Activated CD8-positive, alpha-beta memory T cell treated with anti-CD3 and anti-CD28 coated beads, Interleukin-2, amount 10 ng/mL, durations not matched to agents 7 days and 5 days (primary cell): ENCODE measurements at regions of chr12 and their contacts with region 1.

Region 1: GRCh38 chr12:6867413-6868210 is at the start of gene TPI1:
- DNase-seq: peak; percentile 87
- ATAC-seq: peak; percentile 71
- H3K4me3 Mint-ChIP-seq: peak within 1 kb of the TSS; percentile 98
- H3K27ac Mint-ChIP-seq: peak within 1 kb of the TSS; percentile 90
- H3K4me1 Mint-ChIP-seq: peaks cover 47% of the 10 kb centered on the region
- H3K27me3 Mint-ChIP-seq: no peaks in the 10 kb centered on the region
- total RNA-seq, gene TPI1: 1,086 to 1,277 TPM

Region 2: GRCh38 chr12:6723607-6724396 is 143.8 kb before region 1 on chr12 and contains the start of gene COPS7A:
- CTCF ChIA-PET with region 1: interaction called, 11 read pairs
- DNase-seq: peak; percentile 99
- ATAC-seq: peak; percentile 95
- H3K4me3 Mint-ChIP-seq: peak within 1 kb of the TSS; percentile 79
- H3K27ac Mint-ChIP-seq: peak within 1 kb of the TSS; percentile 89
- H3K4me1 Mint-ChIP-seq: peaks cover 21% of the 10 kb centered on the region
- H3K27me3 Mint-ChIP-seq: no peaks in the 10 kb centered on the region
- total RNA-seq, gene COPS7A: 28.2 to 30.0 TPM

Region 3: GRCh38 chr12:6759741-6760140 is 107.9 kb before region 1 on chr12:
- CTCF ChIA-PET with region 1: no interaction called
- DNase-seq: no peak
- ATAC-seq: no peak
- H3K4me3 Mint-ChIP-seq: no peak overlapping the region
- H3K27ac Mint-ChIP-seq: no peak overlapping the region
- H3K4me1 Mint-ChIP-seq: peaks cover 25% of the 10 kb centered on the region
- H3K27me3 Mint-ChIP-seq: peaks cover 22% of the 10 kb centered on the region

Region 4: GRCh38 chr12:6833189-6833890 is 34.3 kb before region 1 on chr12:
- CTCF ChIA-PET with region 1: interaction called, 30 read pairs
- DNase-seq: no peak
- ATAC-seq: no peak
- H3K4me3 Mint-ChIP-seq: no peak overlapping the region
- H3K27ac Mint-ChIP-seq: no peak overlapping the region
- H3K4me1 Mint-ChIP-seq: peaks cover 12% of the 10 kb centered on the region
- H3K27me3 Mint-ChIP-seq: peaks cover 34% of the 10 kb centered on the region

Region 5: DNA sequence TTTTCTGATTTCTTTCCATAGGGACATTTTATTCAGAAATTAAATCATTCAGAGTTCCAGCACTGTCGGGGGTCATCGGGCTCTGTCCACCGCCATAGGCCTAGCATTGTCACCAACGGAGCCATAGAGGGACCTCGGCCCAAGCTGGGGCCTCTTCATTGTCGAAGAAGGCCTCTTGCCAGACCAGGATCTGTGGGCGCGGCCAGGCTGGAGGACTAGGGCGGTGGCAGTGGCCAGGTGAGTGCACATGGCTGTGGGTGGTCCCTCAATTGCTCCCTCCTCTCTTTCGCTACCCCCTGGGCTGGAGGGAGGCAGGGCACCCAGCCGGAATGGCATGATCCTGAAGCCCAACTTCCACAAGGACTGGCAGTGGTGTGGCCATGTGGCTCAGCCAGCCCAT is 16.1 kb after region 1 on chr12:
- CTCF ChIA-PET with region 1: interaction called, 19 read pairs
- DNase-seq: no peak
- ATAC-seq: no peak
- H3K4me3 Mint-ChIP-seq: no peak overlapping the region
- H3K27ac Mint-ChIP-seq: no peak overlapping the region
- H3K4me1 Mint-ChIP-seq: peaks cover 5% of the 10 kb centered on the region
- H3K27me3 Mint-ChIP-seq: no peaks in the 10 kb centered on the region

Region 6: GRCh38 chr12:6904280-6905278 is 37.0 kb after region 1 on chr12 and contains the start of gene LRRC23:
- CTCF ChIA-PET with region 1: interaction called, 22 read pairs
- DNase-seq: peak; percentile 99
- ATAC-seq: peak; percentile 98
- H3K4me3 Mint-ChIP-seq: no peak within 1 kb of the TSS
- H3K27ac Mint-ChIP-seq: no peak within 1 kb of the TSS
- H3K4me1 Mint-ChIP-seq: peaks cover 3% of the 10 kb centered on the region
- H3K27me3 Mint-ChIP-seq: no peaks in the 10 kb centered on the region
- total RNA-seq, gene LRRC23: 4.9 to 8.7 TPM

Region 7: DNA sequence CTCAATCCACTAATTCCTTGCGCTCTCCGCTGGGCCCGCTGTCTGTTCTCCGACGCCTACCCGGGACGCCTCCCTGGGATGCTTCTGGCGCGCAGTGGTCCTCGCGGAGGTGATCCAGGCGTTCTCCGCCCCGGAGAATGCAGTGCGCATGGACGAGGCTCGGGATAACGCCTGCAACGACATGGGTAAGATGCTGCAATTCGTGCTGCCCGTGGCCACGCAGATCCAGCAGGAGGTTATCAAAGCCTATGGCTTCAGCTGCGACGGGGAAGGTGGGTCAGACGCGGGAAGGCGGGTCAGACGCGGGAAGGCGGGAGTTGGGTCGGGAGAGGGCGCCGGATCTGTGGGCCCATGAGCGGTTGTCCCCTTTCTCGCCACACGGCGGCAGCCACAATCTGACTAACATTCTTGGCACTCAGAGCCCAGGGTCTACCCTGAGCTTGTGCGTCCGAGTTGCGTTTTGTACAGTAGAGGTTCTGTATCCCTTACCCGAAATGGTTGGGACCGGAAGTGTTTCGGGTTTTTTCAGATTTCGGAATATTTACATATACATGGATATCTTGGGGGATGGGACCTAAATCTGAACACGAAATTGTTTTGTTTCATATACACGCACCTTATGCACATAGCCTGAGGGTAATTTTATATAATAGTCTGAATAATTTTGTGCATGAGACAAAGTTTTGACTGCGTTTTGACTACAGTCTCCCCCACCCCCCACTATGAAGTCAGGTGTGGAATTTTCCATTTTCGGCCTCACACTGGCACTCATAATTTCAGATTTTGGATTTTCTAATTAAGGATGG is 77.0 kb after region 1 on chr12:
- CTCF ChIA-PET with region 1: interaction called, 36 read pairs
- DNase-seq: peak; percentile 95
- ATAC-seq: peak; percentile 50
- H3K4me3 Mint-ChIP-seq: peak overlapping the region; percentile 86
- H3K27ac Mint-ChIP-seq: peak overlapping the region; percentile 98
- H3K4me1 Mint-ChIP-seq: peaks cover 61% of the 10 kb centered on the region
- H3K27me3 Mint-ChIP-seq: peaks cover 4% of the 10 kb centered on the region

Region 8: GRCh38 chr12:6965026-6965661 is 97.5 kb after region 1 on chr12:
- CTCF ChIA-PET with region 1: interaction called, 12 read pairs
- DNase-seq: peak; percentile 91
- ATAC-seq: peak; percentile 58
- H3K4me3 Mint-ChIP-seq: no peak overlapping the region
- H3K27ac Mint-ChIP-seq: peak overlapping the region; percentile 82
- H3K4me1 Mint-ChIP-seq: peaks cover 61% of the 10 kb centered on the region
- H3K27me3 Mint-ChIP-seq: no peaks in the 10 kb centered on the region